ENCODE measurements at regions of chr5 and their contacts with region 1.

Region 1: GRCh38 chr5:178120868-178121357 is 7.6 kb downstream of the N4BP3 start:
- DNase-seq: peak; percentile 89 to 95
- ATAC-seq: peak; percentile 81 to 89
- H3K4me3 ChIP-seq: peak overlapping the region; percentile 45 to 70 (median 54)
- H3K27ac ChIP-seq: peak overlapping the region; percentile 73 to 85 (median 78)
- H3K4me1 ChIP-seq: peaks cover 37 to 38% of the 10 kb centered on the region in 2 donors
- H3K27me3 ChIP-seq: peaks cover 5 to 12% (median 10%) of the 10 kb centered on the region in 3 donors
- CTCF ChIP-seq: peak; percentile 53 to 82 (median 69)
- POLR2A ChIP-seq: peak in 1 of 2 donors; percentile 14

Region 2: GRCh38 chr5:178086276-178086675 is 34.6 kb before region 1 on chr5:
- in situ Hi-C with region 1: no loop called
- intact Hi-C with region 1: no loop called
- DNase-seq: no peak
- ATAC-seq: no peak
- H3K4me3 ChIP-seq: no peak overlapping the region
- H3K27ac ChIP-seq: no peak overlapping the region
- H3K4me1 ChIP-seq: no peaks in the 10 kb centered on the region
- H3K27me3 ChIP-seq: peaks cover 0 to 6% (median 3%) of the 10 kb centered on the region in 3 donors
- CTCF ChIP-seq: no peak
- POLR2A ChIP-seq: no peak

Region 3: GRCh38 chr5:178194026-178194425 is 73.1 kb after region 1 on chr5:
- in situ Hi-C with region 1: no loop called
- intact Hi-C with region 1: no loop called
- DNase-seq: no peak
- ATAC-seq: no peak
- H3K4me3 ChIP-seq: no peak overlapping the region
- H3K27ac ChIP-seq: no peak overlapping the region
- H3K4me1 ChIP-seq: no peaks in the 10 kb centered on the region
- H3K27me3 ChIP-seq: no peaks in the 10 kb centered on the region
- CTCF ChIP-seq: no peak
- POLR2A ChIP-seq: no peak

Region 4: DNA sequence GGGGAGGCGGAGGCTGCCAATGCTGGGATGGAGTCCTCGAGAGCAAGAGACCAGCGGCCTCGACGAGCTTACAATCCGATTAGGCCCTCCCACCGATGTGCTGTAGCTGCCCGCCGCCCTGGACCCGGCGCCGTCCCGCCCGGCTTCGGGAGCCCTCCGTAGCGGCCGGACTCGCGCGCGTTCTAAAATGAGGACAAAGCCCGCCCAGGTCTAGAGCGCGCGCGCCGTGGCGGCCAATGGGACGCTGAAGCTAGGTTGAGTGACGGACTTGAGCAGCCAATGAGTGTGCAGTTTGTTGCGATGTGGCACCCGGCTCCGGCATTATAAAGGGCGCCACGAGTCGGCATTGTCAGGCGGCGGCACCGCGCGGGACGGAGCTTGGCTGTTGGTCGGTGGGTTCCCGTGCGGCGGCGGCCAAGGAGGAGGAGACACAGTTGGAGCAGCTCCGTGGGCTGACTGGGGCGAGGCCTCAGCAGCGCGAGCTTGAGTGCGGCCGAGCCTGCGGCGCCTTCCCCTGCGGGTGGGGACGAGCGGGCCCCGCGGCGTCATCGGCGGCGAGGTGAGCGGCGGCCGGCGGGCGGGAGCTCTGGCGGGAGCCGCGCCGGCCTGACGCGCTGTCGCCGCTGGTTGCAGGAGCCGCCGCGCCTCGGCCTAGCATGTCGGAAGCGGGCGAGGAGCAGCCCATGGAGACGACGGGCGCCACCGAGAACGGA is 83.4 kb after region 1 on chr5 and contains the start of gene HNRNPAB:
- in situ Hi-C with region 1: no loop called
- intact Hi-C with region 1: loop called (anchors 5 kb)
- DNase-seq: peak; percentile 94 to 97
- ATAC-seq: peak; percentile 89 to 92
- H3K4me3 ChIP-seq: peak within 1 kb of the TSS; percentile 62 to 79 (median 70)
- H3K27ac ChIP-seq: peak within 1 kb of the TSS; percentile 82 to 92 (median 88)
- H3K4me1 ChIP-seq: peaks cover 26 to 32% of the 10 kb centered on the region in 2 donors
- H3K27me3 ChIP-seq: no peaks in the 10 kb centered on the region
- CTCF ChIP-seq: no peak
- POLR2A ChIP-seq: peak; percentile 100
- total RNA-seq, gene HNRNPAB: 84.2 to 117 (median 106) TPM